ENCODE measurements at regions of chr1 and their contacts with region 1.

Region 1: GRCh38 chr1:65687428-65688214 is 105.1 kb upstream of the PDE4B start:
- DNase-seq: peak; percentile 29 to 95
- H3K4me3 ChIP-seq: no peak overlapping the region
- H3K27ac ChIP-seq: no peak overlapping the region
- H3K4me1 ChIP-seq: peaks cover 0 to 3% (median 0%) of the 10 kb centered on the region in 4 experiments; a peak in 2 of 7 replicates
- H3K27me3 ChIP-seq: no peaks in the 10 kb centered on the region
- CTCF ChIP-seq: peak; percentile 81 to 90 (median 88)
- EP300 ChIP-seq: no peak
- POLR2A ChIP-seq: no peak
- RAD21 ChIP-seq: peak; percentile 99 to 100

Region 2: GRCh38 chr1:65075123-65075976 is 612.3 kb before region 1 on chr1:
- CTCF ChIA-PET with region 1: interaction called, 15 read pairs
- POLR2A ChIA-PET with region 1: no interaction called
- DNase-seq: peak in 1 of 2 experiments; percentile 59
- H3K4me3 ChIP-seq: no peak overlapping the region
- H3K27ac ChIP-seq: no peak overlapping the region
- H3K4me1 ChIP-seq: no peaks in the 10 kb centered on the region
- H3K27me3 ChIP-seq: no peaks in the 10 kb centered on the region; a peak in 1 of 7 replicates
- CTCF ChIP-seq: peak; percentile 52 to 81 (median 76)
- EP300 ChIP-seq: no peak
- POLR2A ChIP-seq: no peak
- RAD21 ChIP-seq: peak; percentile 83

Region 3: GRCh38 chr1:65235867-65236805 is 451.5 kb before region 1 on chr1:
- CTCF ChIA-PET with region 1: interaction called, 69 read pairs
- POLR2A ChIA-PET with region 1: interaction called, 5 read pairs
- DNase-seq: no peak
- H3K4me3 ChIP-seq: no peak overlapping the region
- H3K27ac ChIP-seq: no peak overlapping the region
- H3K4me1 ChIP-seq: no peaks in the 10 kb centered on the region
- H3K27me3 ChIP-seq: no peaks in the 10 kb centered on the region
- CTCF ChIP-seq: peak in 2 of 3 experiments; percentile 55 to 65; a peak in 3 of 4 replicates
- EP300 ChIP-seq: no peak
- POLR2A ChIP-seq: no peak
- RAD21 ChIP-seq: peak; percentile 87 to 88

Region 4: GRCh38 chr1:65431111-65431705 is 256.4 kb before region 1 on chr1:
- CTCF ChIA-PET with region 1: interaction called, 40 read pairs
- POLR2A ChIA-PET with region 1: no interaction called
- DNase-seq: no peak
- H3K4me3 ChIP-seq: no peak overlapping the region
- H3K27ac ChIP-seq: no peak overlapping the region
- H3K4me1 ChIP-seq: peaks cover 2 to 14% (median 9%) of the 10 kb centered on the region in 4 experiments; a peak in 5 of 7 replicates
- H3K27me3 ChIP-seq: no peaks in the 10 kb centered on the region
- CTCF ChIP-seq: peak in 2 of 3 experiments; percentile 40 to 58; a peak in 2 of 4 replicates
- EP300 ChIP-seq: no peak
- POLR2A ChIP-seq: no peak
- RAD21 ChIP-seq: peak; percentile 70 to 74

Region 5: DNA sequence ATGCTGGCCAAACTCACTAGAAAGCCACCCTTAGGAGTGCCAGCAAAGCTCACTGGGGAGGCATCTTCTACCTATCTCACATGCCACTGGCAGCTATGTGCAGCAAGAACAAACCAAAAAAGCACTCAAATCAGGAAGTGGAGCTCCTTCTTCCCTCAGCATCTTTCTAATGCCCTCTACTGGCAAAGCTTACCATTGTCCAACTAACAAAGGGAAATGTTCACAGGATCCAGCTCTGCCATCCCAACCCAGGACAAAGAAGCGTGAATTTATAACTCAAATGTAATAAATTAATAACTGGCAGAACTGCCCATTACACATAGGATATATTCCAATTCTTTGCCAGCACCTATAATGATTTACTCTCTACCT is 228.2 kb before region 1 on chr1:
- CTCF ChIA-PET with region 1: interaction called, 11 read pairs
- POLR2A ChIA-PET with region 1: no interaction called
- DNase-seq: no peak
- H3K4me3 ChIP-seq: no peak overlapping the region
- H3K27ac ChIP-seq: no peak overlapping the region
- H3K4me1 ChIP-seq: peaks cover 0 to 4% (median 1%) of the 10 kb centered on the region in 4 experiments; a peak in 2 of 7 replicates
- H3K27me3 ChIP-seq: no peaks in the 10 kb centered on the region
- CTCF ChIP-seq: peak in 2 of 3 experiments; percentile 62 to 74; a peak in 3 of 4 replicates
- EP300 ChIP-seq: no peak
- POLR2A ChIP-seq: no peak
- RAD21 ChIP-seq: peak; percentile 70 to 80